ENCODE measurements at regions of chr5 and their contacts with region 1.

Region 1: GRCh38 chr5:69007726-69008368 is 86.0 kb upstream of the SLC30A5 start:
- DNase-seq: peak; percentile 24 to 69 (median 62)
- ATAC-seq: peak; percentile 88
- H3K4me3 ChIP-seq: no peak overlapping the region
- H3K4me3 Mint-ChIP-seq: no peak overlapping the region
- H3K27ac ChIP-seq: no peak overlapping the region
- H3K27ac Mint-ChIP-seq: no peak overlapping the region
- H3K4me1 ChIP-seq: no peaks in the 10 kb centered on the region
- H3K4me1 Mint-ChIP-seq: no peaks in the 10 kb centered on the region
- H3K27me3 ChIP-seq: no peaks in the 10 kb centered on the region
- H3K27me3 Mint-ChIP-seq: peaks cover 14 to 51% (median 29%) of the 10 kb centered on the region in 5 donors

Region 2: GRCh38 chr5:68460147-68460798 is 547.6 kb before region 1 on chr5:
- CTCF ChIA-PET with region 1: interaction called, 3 read pairs
- POLR2A ChIA-PET with region 1: no interaction called
- intact Hi-C with region 1: loop called (anchors 5 kb)
- DNase-seq: peak in 7 of 9 donors; percentile 29 to 59 (median 44)
- ATAC-seq: peak; percentile 77
- H3K4me3 ChIP-seq: no peak overlapping the region
- H3K4me3 Mint-ChIP-seq: no peak overlapping the region
- H3K27ac ChIP-seq: no peak overlapping the region
- H3K27ac Mint-ChIP-seq: peak overlapping the region in 1 of 9 donors; percentile 20
- H3K4me1 ChIP-seq: peaks cover 0 to 13% of the 10 kb centered on the region in 2 donors
- H3K4me1 Mint-ChIP-seq: peaks cover 4 to 21% (median 13%) of the 10 kb centered on the region in 7 donors
- H3K27me3 ChIP-seq: no peaks in the 10 kb centered on the region
- H3K27me3 Mint-ChIP-seq: peaks cover 0 to under 1% (median 0%) of the 10 kb centered on the region in 5 donors

Region 3: DNA sequence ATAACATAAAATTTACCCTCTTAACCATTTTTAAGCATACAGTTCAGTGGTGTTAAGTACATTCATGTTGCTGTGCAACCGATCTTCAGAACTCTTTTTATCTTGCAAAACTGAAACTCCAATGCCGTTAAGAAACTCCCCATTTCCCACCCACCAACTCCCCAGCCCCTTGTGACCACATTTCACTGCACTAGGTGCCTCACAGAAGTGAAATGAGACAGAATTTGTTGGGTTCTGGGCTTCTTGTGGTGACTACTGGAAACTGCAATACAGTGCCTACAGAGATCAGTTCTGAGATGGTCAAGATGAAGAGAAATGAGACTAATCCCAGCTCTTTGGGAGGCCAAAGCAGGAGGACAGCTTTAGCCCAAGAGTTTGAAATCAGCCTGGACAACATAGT is 116.1 kb before region 1 on chr5:
- CTCF ChIA-PET with region 1: no interaction called
- POLR2A ChIA-PET with region 1: no interaction called
- intact Hi-C with region 1: loop called in 1 of 2 experiments (anchors 2 kb)
- DNase-seq: peak in 4 of 9 donors; percentile 3 to 32 (median 27)
- ATAC-seq: peak; percentile 48
- H3K4me3 ChIP-seq: no peak overlapping the region
- H3K4me3 Mint-ChIP-seq: peak overlapping the region in 1 of 10 donors; percentile 39
- H3K27ac ChIP-seq: no peak overlapping the region
- H3K27ac Mint-ChIP-seq: peak overlapping the region in 1 of 9 donors; percentile 73
- H3K4me1 ChIP-seq: no peaks in the 10 kb centered on the region
- H3K4me1 Mint-ChIP-seq: peaks cover 3 to 60% (median 32%) of the 10 kb centered on the region in 7 donors
- H3K27me3 ChIP-seq: no peaks in the 10 kb centered on the region
- H3K27me3 Mint-ChIP-seq: no peaks in the 10 kb centered on the region

Measured in naive thymus-derived CD4-positive, alpha-beta T cell (primary cell).